ENCODE measurements at regions of chr22 and their contacts with region 1.

Region 1: DNA sequence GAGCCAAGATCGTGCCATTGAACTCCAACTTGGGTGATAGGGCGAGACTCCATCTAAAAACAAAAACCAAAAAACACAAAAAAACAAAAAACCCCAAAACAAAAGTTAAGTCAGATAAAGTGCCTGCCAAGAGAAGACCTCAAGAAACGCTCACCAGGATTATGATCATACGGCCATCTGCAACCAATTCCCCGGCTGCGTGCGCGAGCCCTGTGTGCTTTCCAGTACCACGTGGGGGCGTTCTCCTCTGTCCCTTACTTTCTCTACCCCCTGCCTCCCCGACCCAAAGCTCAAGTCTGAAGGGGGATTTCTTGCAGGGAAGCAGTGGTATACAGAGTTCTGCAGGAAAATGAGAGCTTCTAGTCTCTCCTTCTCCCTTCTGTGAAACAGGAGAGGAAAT is 10.5 kb upstream of the RPS19BP1 start:
- H3K4me3 ChIP-seq: no peak overlapping the region
- H3K27ac ChIP-seq: no peak overlapping the region
- H3K4me1 ChIP-seq: no peaks in the 10 kb centered on the region
- CTCF ChIP-seq: 0 out of 2 replicates have a peak, but pooled peaks have one; percentile 13

Region 2: GRCh38 chr22:39592134-39593065 is 49.3 kb after region 1 on chr22:
- CTCF ChIA-PET with region 1: no interaction called
- POLR2A ChIA-PET with region 1: no interaction called
- H3K4me3 ChIP-seq: no peak overlapping the region
- H3K27ac ChIP-seq: no peak overlapping the region
- H3K4me1 ChIP-seq: no peaks in the 10 kb centered on the region
- CTCF ChIP-seq: no peak

Region 3: DNA sequence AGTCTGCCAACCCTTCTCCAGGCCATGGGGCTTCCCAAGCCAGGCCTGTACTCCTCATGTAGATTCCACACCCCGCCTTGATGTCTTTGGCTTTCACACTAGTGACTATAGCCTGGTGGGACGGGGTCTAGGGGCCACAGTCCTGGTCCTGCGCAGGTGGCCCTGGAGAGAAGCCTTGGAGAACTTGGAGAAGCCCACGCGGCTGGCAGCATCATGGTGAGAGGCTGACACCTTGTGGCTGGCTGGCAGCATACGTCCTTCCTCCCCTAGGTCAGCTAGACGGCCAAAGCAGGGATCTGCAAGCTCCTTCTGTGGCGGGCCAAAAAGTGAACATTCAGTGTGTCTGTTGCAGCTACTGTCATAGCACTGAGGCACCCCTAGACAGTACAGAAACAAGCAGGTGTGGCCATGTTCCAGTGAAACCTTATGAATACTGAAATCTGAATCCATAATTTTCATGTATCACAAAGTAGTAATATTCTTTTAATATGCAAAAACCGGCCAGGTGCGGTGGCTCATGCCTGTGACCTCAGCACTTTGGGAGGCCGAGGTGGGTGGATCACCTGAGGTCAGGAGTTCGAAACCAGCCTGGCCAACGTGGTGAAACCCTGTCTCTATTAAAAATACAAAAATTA is 493.6 kb after region 1 on chr22:
- CTCF ChIA-PET with region 1: interaction called, 13 read pairs
- POLR2A ChIA-PET with region 1: interaction called, 3 read pairs
- H3K4me3 ChIP-seq: no peak overlapping the region
- H3K27ac ChIP-seq: no peak overlapping the region
- H3K4me1 ChIP-seq: peaks cover 16% of the 10 kb centered on the region
- CTCF ChIP-seq: peak; percentile 83

Measured in HEK293 (cell line).